SK-N-SH (cell line): ENCODE measurements at regions of chr12 and their contacts with region 1.

Region 1: DNA sequence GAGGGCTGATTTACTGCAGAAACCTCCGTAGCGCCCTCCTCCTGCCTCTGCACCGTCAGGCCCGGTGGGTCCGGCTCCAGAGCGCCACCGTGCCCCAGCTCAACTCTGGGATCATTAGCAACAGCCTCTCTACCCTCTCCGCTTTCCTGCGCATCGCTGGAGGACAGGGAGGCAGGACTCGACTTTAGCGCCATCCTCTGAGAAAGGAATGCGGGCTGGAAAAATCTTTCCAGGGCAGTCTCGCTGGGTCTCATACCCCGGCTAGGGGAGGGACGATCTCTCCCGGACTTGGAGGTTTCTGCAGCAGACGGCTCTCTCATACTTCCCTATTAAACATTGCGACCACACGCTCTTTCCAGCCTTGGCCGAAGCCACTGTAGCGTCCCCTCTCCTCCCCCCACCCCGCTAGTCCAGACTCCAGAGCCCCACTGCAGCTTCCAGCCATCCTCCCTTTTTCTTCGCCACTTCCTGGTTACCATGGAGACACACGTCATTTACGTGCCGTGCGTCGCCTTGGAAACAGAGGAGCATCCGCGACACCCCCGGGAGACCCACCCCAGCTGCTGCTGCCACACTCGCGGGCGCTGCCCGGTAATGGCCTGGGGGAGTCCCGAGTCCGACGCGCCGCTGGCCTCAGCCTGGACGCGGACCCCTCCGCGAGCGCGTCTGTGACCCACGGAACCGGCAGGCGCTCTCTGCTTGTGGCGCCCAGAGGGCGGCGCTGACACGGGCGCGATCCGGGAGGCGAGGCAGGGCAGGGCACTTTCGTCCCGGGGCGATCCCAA is at the start of gene CCDC184:
- DNase-seq: peak; percentile 91
- H3K4me3 ChIP-seq: peak within 1 kb of the TSS; percentile 65 to 90
- H3K27ac ChIP-seq: peak within 1 kb of the TSS; percentile 80 to 96
- H3K4me1 ChIP-seq: peaks cover 9 to 26% of the 10 kb centered on the region in 2 experiments; a peak in 3 of 4 replicates
- H3K27me3 ChIP-seq: no peaks in the 10 kb centered on the region
- CTCF ChIP-seq: peak; percentile 54
- EP300 ChIP-seq: no peak; a peak in 2 of 4 replicates
- RAD21 ChIP-seq: peak; percentile 40
- polyA plus RNA-seq, gene CCDC184: 4.2 and 5.8 TPM in 2 replicates

Region 2: GRCh38 chr12:48157018-48157888 is 26.0 kb before region 1 on chr12 and contains the start of gene ASB8:
- CTCF ChIA-PET with region 1: interaction called, 9 read pairs
- POLR2A ChIA-PET with region 1: interaction called, 11 read pairs
- DNase-seq: peak; percentile 97
- H3K4me3 ChIP-seq: peak within 1 kb of the TSS; percentile 91 to 97
- H3K27ac ChIP-seq: peak within 1 kb of the TSS; percentile 59 to 92; a peak in 3 of 4 replicates
- H3K4me1 ChIP-seq: peaks cover 0 to 8% of the 10 kb centered on the region in 2 experiments; a peak in 2 of 4 replicates
- H3K27me3 ChIP-seq: no peaks in the 10 kb centered on the region
- CTCF ChIP-seq: peak; percentile 49
- EP300 ChIP-seq: no peak
- RAD21 ChIP-seq: peak; percentile 28; the same call in 1 of the 2 replicates
- polyA plus RNA-seq, gene ASB8: 13.8 and 16.9 TPM in 2 replicates

Region 3: GRCh38 chr12:48197971-48198671 is 14.8 kb after region 1 on chr12:
- CTCF ChIA-PET with region 1: interaction called, 90 read pairs
- POLR2A ChIA-PET with region 1: interaction called, 3 read pairs
- DNase-seq: peak; percentile 91
- H3K4me3 ChIP-seq: peak overlapping the region; percentile 67 to 83
- H3K27ac ChIP-seq: peak overlapping the region; percentile 64 to 96
- H3K4me1 ChIP-seq: peaks cover 7 to 19% of the 10 kb centered on the region in 2 experiments
- H3K27me3 ChIP-seq: no peaks in the 10 kb centered on the region
- CTCF ChIP-seq: no peak
- EP300 ChIP-seq: no peak
- RAD21 ChIP-seq: no peak; the same call in 1 of the 2 replicates